ENCODE measurements at regions of chr22 and their contacts with region 1.

Region 1: DNA sequence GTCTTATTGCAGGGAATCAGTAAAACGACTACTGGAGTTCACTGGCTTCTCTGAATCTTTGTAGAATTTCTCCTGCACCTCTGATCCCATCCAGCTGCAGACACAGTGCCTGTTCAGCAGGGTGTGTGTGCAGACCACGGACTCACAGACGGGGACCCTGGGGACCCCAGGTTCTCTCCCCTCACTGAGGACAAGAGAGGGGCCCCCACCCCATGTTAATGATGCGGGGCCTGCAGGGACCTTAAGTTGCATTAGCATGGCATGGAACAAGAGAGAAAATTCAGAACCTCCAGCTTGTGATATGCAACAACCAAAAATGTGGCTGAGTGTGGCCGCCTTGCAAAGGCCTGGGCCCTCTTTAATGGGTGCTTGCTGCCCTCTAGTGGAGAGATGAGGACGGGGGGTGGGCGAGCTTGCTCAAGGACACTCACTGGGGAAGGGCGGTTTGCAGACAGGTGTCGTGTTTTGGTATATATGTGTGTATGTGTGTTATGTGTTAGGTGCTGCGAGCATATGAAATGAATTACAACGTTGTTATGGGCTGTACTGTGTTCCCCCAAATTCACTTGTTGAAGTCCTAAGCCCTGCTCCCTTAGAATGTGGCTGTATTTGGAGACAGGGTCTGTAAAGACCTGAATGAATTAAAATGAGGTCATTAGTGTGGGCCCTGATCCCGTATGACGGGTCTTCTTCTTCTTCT is 84.4 kb upstream of the SEPTIN5 start:
- DNase-seq: peak; percentile 75 to 82
- ATAC-seq: peak; percentile 87 to 94 (median 90)
- H3K4me3 ChIP-seq: no peak overlapping the region
- H3K27ac ChIP-seq: no peak overlapping the region
- H3K4me1 ChIP-seq: peaks cover 0 to 7% (median 0%) of the 10 kb centered on the region in 9 donors
- H3K27me3 ChIP-seq: peaks cover 0 to 13% (median under 1%) of the 10 kb centered on the region in 7 donors
- CTCF ChIP-seq: peak; percentile 91 to 98 (median 95)

Region 2: GRCh38 chr22:19109198-19110067 is 520.4 kb before region 1 on chr22:
- intact Hi-C with region 1: no loop called
- DNase-seq: no peak
- ATAC-seq: peak in 6 of 8 donors; percentile 44 to 83 (median 60)
- H3K4me3 ChIP-seq: peak overlapping the region in 1 of 10 donors; percentile 13
- H3K27ac ChIP-seq: peak overlapping the region in 2 of 10 donors; percentile 19 to 78
- H3K4me1 ChIP-seq: peaks cover 13 to 69% (median 53%) of the 10 kb centered on the region in 9 donors
- H3K27me3 ChIP-seq: no peaks in the 10 kb centered on the region
- CTCF ChIP-seq: no peak

Region 3: DNA sequence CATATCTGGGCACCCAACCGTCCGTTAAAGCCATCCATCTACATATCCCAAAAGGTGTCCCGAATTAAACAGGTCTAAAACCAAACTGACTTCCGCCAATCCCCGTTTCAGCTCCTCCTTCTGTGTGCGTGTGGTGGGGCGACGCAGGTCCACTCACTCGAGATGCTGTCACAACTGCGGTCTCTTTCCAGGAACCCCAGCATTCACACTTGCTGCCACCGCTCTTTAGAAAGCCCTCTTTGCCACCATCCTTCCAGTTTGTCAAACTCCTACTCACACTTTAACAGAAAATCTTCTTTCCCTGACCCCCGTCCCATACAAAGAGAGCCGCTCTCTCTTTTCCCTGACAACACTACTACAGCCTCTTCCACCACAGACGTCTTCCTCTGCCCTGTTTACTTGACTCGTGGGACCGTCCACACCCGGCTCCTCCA is 485.9 kb before region 1 on chr22:
- intact Hi-C with region 1: loop called in 7 of 10 experiments (anchors 2 to 10 kb)
- DNase-seq: no peak
- ATAC-seq: peak in 1 of 8 donors; percentile 2
- H3K4me3 ChIP-seq: peak overlapping the region; percentile 69 to 98 (median 84)
- H3K27ac ChIP-seq: peak overlapping the region in 9 of 10 donors; percentile 56 to 87 (median 73)
- H3K4me1 ChIP-seq: peaks cover under 1 to 18% (median 13%) of the 10 kb centered on the region in 9 donors
- H3K27me3 ChIP-seq: peaks cover 9 to 22% (median 12%) of the 10 kb centered on the region in 7 donors
- CTCF ChIP-seq: no peak

Region 4: GRCh38 chr22:19149047-19149883 is 480.6 kb before region 1 on chr22:
- intact Hi-C with region 1: loop called in 7 of 10 experiments (anchors 2 to 10 kb)
- DNase-seq: no peak
- ATAC-seq: no peak
- H3K4me3 ChIP-seq: peak overlapping the region in 9 of 10 donors; percentile 7 to 44 (median 22)
- H3K27ac ChIP-seq: no peak overlapping the region
- H3K4me1 ChIP-seq: peaks cover 0 to 13% (median 8%) of the 10 kb centered on the region in 9 donors
- H3K27me3 ChIP-seq: peaks cover 37 to 69% (median 59%) of the 10 kb centered on the region in 7 donors
- CTCF ChIP-seq: no peak

Region 5: DNA sequence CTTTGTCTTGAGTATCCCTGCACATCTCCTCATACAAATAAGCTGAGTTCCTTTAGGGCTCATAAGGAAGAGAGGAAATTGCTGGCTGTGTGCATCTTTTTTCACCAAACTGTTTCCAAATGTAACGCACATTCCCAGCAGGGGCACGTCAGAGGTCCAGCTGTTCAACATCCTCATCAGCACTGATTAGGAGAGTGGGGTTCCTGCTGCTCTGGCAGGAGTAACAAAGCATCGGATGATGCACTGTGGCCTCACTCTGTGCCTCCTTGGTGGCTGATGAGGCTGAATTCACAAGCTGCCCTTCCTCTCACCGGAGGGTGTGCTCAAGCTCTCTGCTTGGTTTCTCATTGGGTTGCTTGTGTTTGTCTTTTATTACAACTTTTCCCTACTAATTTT is 415.8 kb before region 1 on chr22:
- intact Hi-C with region 1: loop called in 3 of 10 experiments (anchors 10 kb)
- DNase-seq: no peak
- ATAC-seq: no peak
- H3K4me3 ChIP-seq: no peak overlapping the region
- H3K27ac ChIP-seq: no peak overlapping the region
- H3K4me1 ChIP-seq: peaks cover 0 to 16% (median 16%) of the 10 kb centered on the region in 9 donors
- H3K27me3 ChIP-seq: no peaks in the 10 kb centered on the region
- CTCF ChIP-seq: no peak

Region 6: DNA sequence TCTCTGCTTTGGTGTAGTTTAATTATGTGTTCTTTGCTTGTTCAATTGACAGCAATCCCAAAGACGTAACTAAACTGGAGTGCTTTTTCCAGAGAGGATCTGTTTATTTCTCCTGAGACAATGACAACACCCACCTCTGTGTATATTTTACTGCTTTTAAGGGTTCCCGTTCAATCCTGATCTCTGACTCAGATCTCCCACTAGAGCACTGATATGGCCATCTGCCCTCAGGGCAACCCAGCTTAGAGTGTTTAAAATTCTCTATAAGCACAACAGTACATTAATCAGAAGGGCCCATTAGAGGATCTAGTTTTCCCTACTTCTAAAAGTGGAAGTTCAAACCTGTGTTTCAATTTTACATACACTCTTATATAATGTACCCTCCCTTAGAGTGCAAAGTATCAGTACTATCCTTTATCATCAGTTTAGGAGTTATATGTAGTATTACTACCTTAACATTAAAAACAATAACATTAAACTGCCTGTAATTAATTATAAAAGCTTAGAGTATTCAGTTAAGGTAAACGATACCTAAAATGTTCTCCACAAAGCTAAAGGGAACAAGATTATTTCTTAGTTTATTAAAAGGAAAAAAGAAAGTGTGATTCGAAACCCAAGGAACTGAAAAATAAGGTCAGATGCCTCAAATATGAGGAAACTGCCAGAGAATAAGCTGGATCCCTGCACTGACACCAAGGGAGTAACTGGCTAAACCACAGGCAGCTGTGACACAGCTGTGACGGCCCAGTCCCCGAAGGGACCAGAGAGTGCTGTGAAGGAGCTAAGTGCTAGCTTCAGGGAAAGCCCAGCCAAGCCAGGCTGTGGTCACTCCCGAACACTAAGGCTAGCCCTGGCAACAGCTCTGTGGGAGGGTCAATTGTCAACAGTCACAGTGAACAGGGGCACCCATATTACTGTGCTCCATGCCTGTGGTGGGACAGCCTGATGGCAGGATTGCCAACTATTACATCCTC is 166.1 kb before region 1 on chr22:
- intact Hi-C with region 1: no loop called
- DNase-seq: peak; percentile 32 to 56
- ATAC-seq: peak; percentile 56 to 85 (median 66)
- H3K4me3 ChIP-seq: no peak overlapping the region
- H3K27ac ChIP-seq: peak overlapping the region in 1 of 10 donors; percentile 41
- H3K4me1 ChIP-seq: no peaks in the 10 kb centered on the region
- H3K27me3 ChIP-seq: no peaks in the 10 kb centered on the region
- CTCF ChIP-seq: no peak

Region 7: DNA sequence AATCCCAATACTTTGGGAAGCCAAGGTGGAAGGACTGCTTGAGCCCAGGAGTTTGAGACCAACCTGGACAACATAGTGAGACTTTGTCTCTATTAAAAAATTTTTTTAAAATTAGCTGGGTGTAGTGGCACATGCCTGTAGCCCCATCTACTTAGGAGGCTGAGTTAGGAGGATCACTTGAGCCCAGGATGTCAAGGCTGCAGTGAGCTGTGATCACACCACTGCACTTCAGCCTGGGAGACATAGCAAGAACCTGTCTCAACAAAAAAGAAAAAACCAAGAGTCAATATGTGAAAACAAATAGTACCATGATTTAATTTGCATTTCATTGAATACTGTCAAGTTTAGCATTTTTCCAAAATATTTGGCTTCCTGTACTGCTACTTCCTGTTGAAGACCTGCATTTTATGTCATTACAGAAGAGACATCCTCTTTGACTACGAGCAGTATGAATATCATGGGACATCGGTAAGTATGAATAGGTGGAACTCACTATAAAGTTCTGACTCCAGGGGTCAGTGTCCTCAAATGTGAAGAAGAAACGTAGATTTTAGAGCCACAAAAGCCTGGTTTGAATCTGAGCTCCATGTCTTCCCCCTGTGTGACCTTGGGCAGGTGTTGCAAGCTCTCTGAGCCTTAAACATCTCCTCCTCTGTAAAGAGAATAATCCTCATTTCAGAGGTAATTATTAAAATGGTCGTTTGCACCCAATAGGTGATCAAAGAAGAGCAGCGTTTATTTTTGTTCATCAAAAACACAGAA is 134.1 kb before region 1 on chr22:
- intact Hi-C with region 1: loop called in 8 of 10 experiments (anchors 1 to 5 kb)
- DNase-seq: no peak
- ATAC-seq: peak in 4 of 8 donors; percentile 33 to 57 (median 48)
- H3K4me3 ChIP-seq: no peak overlapping the region
- H3K27ac ChIP-seq: no peak overlapping the region
- H3K4me1 ChIP-seq: peaks cover 0 to 4% (median 0%) of the 10 kb centered on the region in 9 donors
- H3K27me3 ChIP-seq: no peaks in the 10 kb centered on the region
- CTCF ChIP-seq: peak in 8 of 9 donors; percentile 27 to 59 (median 45)

Region 8: DNA sequence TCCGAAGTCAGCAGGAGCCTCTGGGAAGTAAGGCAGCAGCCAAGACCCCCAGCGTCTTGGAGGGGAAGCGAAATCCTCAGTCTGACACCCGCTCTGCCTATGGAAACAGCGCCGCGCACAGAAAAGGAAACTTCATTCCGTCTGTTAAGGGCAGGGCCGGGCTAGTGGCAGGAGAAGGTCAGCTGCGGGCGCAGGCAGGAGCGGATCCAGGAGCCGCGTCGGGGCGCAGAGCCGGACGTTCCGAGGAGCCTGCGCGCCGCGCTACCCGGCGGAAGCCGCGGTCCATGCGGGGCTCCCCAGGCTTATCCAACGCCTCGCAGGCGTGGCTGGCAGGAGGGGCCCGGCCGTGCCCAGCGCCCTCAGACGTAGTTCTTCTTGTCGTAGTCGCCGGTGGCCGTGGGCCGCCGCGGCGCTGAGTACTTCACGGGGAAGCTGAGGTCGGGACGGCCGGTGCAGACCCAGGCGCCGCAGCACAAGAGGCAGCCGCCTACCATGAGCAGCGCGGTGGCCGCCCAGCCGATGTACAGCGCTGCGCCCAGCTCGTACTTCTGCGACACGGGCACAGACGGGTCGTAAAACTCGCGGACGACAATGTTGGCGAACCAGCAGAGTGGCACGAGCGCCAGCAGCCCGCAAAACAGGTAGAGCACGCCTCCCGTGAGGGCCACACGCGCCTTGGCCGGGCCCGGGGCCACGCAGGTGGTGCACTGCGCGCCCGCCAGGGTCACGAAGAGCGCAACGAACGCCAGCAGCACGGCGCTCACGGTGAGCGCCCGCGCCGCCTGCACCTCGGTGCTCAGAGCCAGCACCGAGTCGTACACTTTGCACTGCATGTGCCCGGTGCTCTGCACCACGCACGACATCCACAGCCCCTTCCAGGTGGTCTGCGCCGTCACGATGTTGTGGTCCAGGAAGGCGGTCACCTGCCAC is 106.4 kb before region 1 on chr22:
- intact Hi-C with region 1: loop called in 1 of 10 experiments (anchors 10 kb)
- DNase-seq: no peak
- ATAC-seq: peak in 5 of 8 donors; percentile 0 to 18 (median 9)
- H3K4me3 ChIP-seq: peak overlapping the region; percentile 51 to 75 (median 60)
- H3K27ac ChIP-seq: peak overlapping the region; percentile 71 to 97 (median 89)
- H3K4me1 ChIP-seq: peaks cover 19 to 78% (median 36%) of the 10 kb centered on the region in 9 donors
- H3K27me3 ChIP-seq: peaks cover 13 to 43% (median 30%) of the 10 kb centered on the region in 7 donors
- CTCF ChIP-seq: no peak

Measured in heart right ventricle (tissue), 16 donors.